Mammary epithelial cell (primary cell): ENCODE measurements at regions of chr7 and their contacts with region 1.

Region 1: GRCh38 chr7:50679218-50680007 is 103.3 kb downstream of the GRB10 start:
- DNase-seq: peak; percentile 50
- H3K4me3 ChIP-seq: no peak overlapping the region
- H3K27ac ChIP-seq: no peak overlapping the region
- H3K4me1 ChIP-seq: no peaks in the 10 kb centered on the region
- H3K27me3 ChIP-seq: peaks cover 2% of the 10 kb centered on the region
- CTCF ChIP-seq: peak; percentile 27 to 53

Region 2: GRCh38 chr7:50206453-50207250 is 472.8 kb before region 1 on chr7:
- CTCF ChIA-PET with region 1: no interaction called
- dilution Hi-C with region 1: no loop called
- in situ Hi-C with region 1: no loop called
- intact Hi-C with region 1: loop called (anchors 1 kb)
- DNase-seq: no peak
- H3K4me3 ChIP-seq: no peak overlapping the region
- H3K27ac ChIP-seq: no peak overlapping the region
- H3K4me1 ChIP-seq: no peaks in the 10 kb centered on the region
- H3K27me3 ChIP-seq: peaks cover 2% of the 10 kb centered on the region
- CTCF ChIP-seq: no peak

Region 3: GRCh38 chr7:50475340-50475739 is 204.1 kb before region 1 on chr7:
- CTCF ChIA-PET with region 1: no interaction called
- dilution Hi-C with region 1: loop called (anchors 5 kb)
- in situ Hi-C with region 1: no loop called
- intact Hi-C with region 1: no loop called
- DNase-seq: no peak
- H3K4me3 ChIP-seq: no peak overlapping the region
- H3K27ac ChIP-seq: no peak overlapping the region
- H3K4me1 ChIP-seq: no peaks in the 10 kb centered on the region
- H3K27me3 ChIP-seq: peaks cover 2% of the 10 kb centered on the region
- CTCF ChIP-seq: no peak

Region 4: GRCh38 chr7:50632561-50633413 is 46.6 kb before region 1 on chr7:
- CTCF ChIA-PET with region 1: no interaction called
- dilution Hi-C with region 1: loop called (anchors 5 kb)
- in situ Hi-C with region 1: no loop called
- intact Hi-C with region 1: no loop called
- DNase-seq: peak; percentile 70
- H3K4me3 ChIP-seq: no peak overlapping the region
- H3K27ac ChIP-seq: no peak overlapping the region
- H3K4me1 ChIP-seq: peaks cover 3% of the 10 kb centered on the region
- H3K27me3 ChIP-seq: no peaks in the 10 kb centered on the region
- CTCF ChIP-seq: peak; percentile 92 to 94

Region 5: DNA sequence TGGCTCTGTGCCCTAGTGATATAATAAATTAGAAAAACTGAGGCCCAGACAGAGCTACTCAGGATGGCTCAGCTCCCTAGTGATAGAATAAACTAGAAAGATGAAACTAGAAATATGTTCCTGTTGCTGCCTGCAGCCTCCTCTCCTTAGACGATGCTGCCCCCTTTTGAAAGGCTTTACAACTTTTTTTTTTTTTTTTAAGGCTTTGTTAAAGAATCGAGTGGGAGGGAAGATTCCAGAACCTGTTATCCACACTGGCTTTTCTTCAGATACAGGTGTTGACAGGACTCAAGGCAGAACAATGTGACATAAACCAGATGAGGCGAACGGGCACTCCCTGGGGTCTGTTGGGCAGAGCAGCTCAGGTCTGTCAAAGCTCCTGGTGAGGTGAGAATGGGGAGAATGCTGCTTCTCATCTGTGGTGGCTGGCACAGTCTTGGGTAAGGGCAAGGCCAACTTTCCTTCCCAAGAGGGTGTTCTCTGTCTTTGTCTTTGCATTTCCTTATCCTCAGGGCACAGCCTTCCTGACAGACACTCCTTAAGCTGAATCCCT is 462.1 kb after region 1 on chr7:
- CTCF ChIA-PET with region 1: no interaction called
- dilution Hi-C with region 1: no loop called
- in situ Hi-C with region 1: loop called (anchors 25 kb)
- intact Hi-C with region 1: loop called (anchors 1 kb)
- DNase-seq: peak; percentile 48
- H3K4me3 ChIP-seq: no peak overlapping the region
- H3K27ac ChIP-seq: no peak overlapping the region
- H3K4me1 ChIP-seq: peaks cover 36% of the 10 kb centered on the region
- H3K27me3 ChIP-seq: no peaks in the 10 kb centered on the region
- CTCF ChIP-seq: peak; percentile 63 to 75